Sigmoid colon (tissue), 7 donors: ENCODE measurements at regions of chr10 and their contacts with region 1.

Region 1: GRCh38 chr10:84139126-84140035 is at the start of gene GHITM:
- DNase-seq: peak; percentile 99
- H3K4me3 ChIP-seq: peak within 1 kb of the TSS; percentile 95 to 99 (median 97)
- H3K27ac ChIP-seq: peak within 1 kb of the TSS; percentile 95 to 98 (median 97)
- H3K4me1 ChIP-seq: peaks cover 0 to 21% (median 16%) of the 10 kb centered on the region in 4 donors
- H3K27me3 ChIP-seq: no peaks in the 10 kb centered on the region
- CTCF ChIP-seq: peak; percentile 41 to 62 (median 56)
- EP300 ChIP-seq: peak in 1 of 4 donors; percentile 74
- POLR2A ChIP-seq: peak; percentile 88 to 90
- total RNA-seq, gene GHITM: 140 to 212 (median 186) TPM

Region 2: GRCh38 chr10:84076540-84077195 is 62.7 kb before region 1 on chr10:
- intact Hi-C with region 1: loop called (anchors 5 kb)
- DNase-seq: no peak
- H3K4me3 ChIP-seq: no peak overlapping the region
- H3K27ac ChIP-seq: peak overlapping the region; percentile 49 to 82 (median 70)
- H3K4me1 ChIP-seq: peaks cover 0 to 27% (median 22%) of the 10 kb centered on the region in 4 donors
- H3K27me3 ChIP-seq: no peaks in the 10 kb centered on the region
- CTCF ChIP-seq: peak in 2 of 4 experiments; percentile 13 to 21
- EP300 ChIP-seq: no peak
- POLR2A ChIP-seq: no peak